Right ventricle myocardium superior (tissue), 1 donor: ENCODE measurements at regions of chr7 and their contacts with region 1.

Region 1: GRCh38 chr7:135645296-135645904 is 16.9 kb upstream of the STMP1 start:
- DNase-seq: no peak
- ATAC-seq: peak; percentile 59

Region 2: DNA sequence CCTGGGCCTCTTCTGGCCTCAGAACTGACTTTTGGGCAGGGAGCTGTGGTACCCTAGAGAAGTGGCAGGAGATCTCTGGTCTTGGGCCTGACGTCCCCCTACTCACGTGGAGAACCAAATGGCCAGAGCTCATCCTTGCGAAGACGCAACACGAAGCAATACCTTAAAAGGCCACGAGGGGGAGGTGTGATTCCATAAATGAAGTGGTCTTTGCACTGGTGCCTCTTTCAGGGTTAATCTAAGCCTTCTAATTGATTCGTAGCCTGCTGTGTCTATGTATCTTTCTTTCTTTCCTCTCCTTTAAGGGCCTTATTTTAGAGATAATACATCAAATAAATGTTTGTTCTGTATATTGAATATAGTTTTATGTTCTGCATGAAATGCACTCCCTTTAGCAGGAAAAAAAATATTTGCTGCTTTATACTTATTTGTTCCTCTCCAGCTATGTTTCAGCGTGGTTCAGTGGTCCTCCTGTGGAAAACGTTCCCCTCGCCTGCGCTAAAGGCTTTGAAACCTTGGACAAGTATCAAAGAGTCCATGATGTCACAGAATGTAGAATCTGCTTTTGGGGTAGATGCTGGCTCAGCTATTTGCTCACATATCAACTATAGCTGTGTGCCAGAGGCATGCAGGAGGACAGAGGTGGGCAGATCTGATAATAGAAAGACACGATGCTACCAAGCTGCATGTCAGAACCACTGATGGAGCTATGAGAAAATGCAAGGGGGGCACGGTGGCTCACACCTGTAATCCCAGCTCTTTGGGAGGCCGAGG is 370.7 kb before region 1 on chr7:
- intact Hi-C with region 1: loop called (anchors 5 kb)
- DNase-seq: peak; percentile 54
- ATAC-seq: peak; percentile 73